ENCODE measurements at regions of chr10 and their contacts with region 1.

Region 1: GRCh38 chr10:29517352-29517923 is 117.3 kb downstream of the SVIL start:
- DNase-seq: no peak
- H3K4me3 Mint-ChIP-seq: no peak overlapping the region
- H3K27ac Mint-ChIP-seq: no peak overlapping the region
- H3K4me1 Mint-ChIP-seq: peaks cover 2% of the 10 kb centered on the region
- H3K27me3 Mint-ChIP-seq: no peaks in the 10 kb centered on the region

Region 2: DNA sequence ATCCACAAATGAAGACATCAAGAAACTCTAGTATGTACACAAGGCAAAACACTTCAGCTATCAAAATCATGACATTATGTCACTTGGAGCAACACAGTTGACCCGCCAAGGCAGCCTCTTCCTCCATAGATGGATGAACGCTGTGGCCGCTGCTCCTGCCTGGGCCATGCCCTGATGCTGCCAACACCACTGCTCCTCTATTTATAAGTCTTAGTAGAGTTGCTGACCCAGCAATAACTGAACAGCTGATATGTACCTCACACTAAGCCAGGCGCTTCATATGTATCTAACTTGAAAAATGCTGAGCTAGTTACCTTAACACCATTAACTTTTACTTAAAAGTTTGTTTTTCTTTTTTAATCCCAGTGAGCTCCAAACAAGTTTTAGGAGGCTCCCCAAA is 96.7 kb before region 1 on chr10:
- intact Hi-C with region 1: no loop called
- DNase-seq: no peak
- H3K4me3 Mint-ChIP-seq: no peak overlapping the region
- H3K27ac Mint-ChIP-seq: no peak overlapping the region
- H3K4me1 Mint-ChIP-seq: no peaks in the 10 kb centered on the region
- H3K27me3 Mint-ChIP-seq: no peaks in the 10 kb centered on the region

Region 3: DNA sequence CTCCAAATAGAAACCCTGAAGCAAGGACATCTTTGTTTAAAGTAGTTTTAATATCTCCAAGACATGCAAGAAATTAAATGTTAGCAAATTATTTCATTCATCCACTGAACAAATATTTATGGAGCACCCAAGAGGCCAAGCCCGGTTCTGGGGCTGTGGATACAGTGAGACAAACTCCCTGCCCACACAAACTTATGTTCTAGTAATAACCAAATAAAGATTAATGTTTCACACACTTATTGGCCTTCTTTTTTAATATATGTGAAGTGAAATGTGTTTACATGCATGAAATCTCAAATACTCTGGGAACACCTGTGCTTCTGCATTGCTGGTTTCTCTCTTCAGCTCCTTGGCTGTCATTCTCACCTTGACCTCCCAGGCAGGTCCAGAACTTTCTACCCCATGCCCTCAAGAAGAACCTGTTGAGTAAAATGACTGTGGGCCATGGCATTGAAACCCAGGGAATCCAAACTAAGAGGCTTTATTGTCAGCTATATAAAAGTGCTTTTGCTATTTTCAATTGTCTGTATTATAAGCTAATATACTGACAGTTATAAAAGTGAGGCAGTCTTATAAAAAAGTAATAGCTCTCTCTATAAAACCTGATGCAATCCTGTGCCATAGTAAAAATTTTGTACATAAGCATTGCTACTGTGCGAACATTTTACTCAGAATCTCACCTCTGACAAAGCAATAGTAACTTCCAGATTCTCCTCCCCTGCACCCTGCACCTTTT is 73.6 kb after region 1 on chr10:
- intact Hi-C with region 1: loop called (anchors 1 kb)
- DNase-seq: no peak
- H3K4me3 Mint-ChIP-seq: no peak overlapping the region
- H3K27ac Mint-ChIP-seq: no peak overlapping the region
- H3K4me1 Mint-ChIP-seq: peaks cover 8% of the 10 kb centered on the region
- H3K27me3 Mint-ChIP-seq: no peaks in the 10 kb centered on the region

Measured in activated CD4-positive, alpha-beta T cell treated with anti-CD3 and anti-CD28 coated beads, Interleukin-2, amount 10 ng/mL, durations not matched to agents 24 days and 14 days (primary cell).